ENCODE measurements at regions of chr4 and their contacts with region 1.

Region 1: GRCh38 chr4:83535520-83536361 is at the start of gene GPAT3:
- DNase-seq: peak; percentile 91
- H3K4me3 ChIP-seq: peak within 1 kb of the TSS; percentile 64 to 80 (median 66)
- H3K27ac ChIP-seq: peak within 1 kb of the TSS; percentile 78 to 81 (median 79)
- H3K4me1 ChIP-seq: peaks cover 0 to 30% (median 17%) of the 10 kb centered on the region in 4 donors
- H3K27me3 ChIP-seq: no peaks in the 10 kb centered on the region
- CTCF ChIP-seq: no peak
- EP300 ChIP-seq: no peak
- POLR2A ChIP-seq: peak in 1 of 2 donors; percentile 43
- total RNA-seq, gene GPAT3: 5.6 to 23.1 (median 17.3) TPM

Region 2: GRCh38 chr4:82984459-82984858 is 551.3 kb before region 1 on chr4:
- intact Hi-C with region 1: no loop called
- DNase-seq: no peak
- H3K4me3 ChIP-seq: no peak overlapping the region
- H3K27ac ChIP-seq: no peak overlapping the region
- H3K4me1 ChIP-seq: peaks cover 0 to 4% (median 0%) of the 10 kb centered on the region in 4 donors
- H3K27me3 ChIP-seq: no peaks in the 10 kb centered on the region
- CTCF ChIP-seq: no peak
- EP300 ChIP-seq: no peak
- POLR2A ChIP-seq: no peak

Region 3: DNA sequence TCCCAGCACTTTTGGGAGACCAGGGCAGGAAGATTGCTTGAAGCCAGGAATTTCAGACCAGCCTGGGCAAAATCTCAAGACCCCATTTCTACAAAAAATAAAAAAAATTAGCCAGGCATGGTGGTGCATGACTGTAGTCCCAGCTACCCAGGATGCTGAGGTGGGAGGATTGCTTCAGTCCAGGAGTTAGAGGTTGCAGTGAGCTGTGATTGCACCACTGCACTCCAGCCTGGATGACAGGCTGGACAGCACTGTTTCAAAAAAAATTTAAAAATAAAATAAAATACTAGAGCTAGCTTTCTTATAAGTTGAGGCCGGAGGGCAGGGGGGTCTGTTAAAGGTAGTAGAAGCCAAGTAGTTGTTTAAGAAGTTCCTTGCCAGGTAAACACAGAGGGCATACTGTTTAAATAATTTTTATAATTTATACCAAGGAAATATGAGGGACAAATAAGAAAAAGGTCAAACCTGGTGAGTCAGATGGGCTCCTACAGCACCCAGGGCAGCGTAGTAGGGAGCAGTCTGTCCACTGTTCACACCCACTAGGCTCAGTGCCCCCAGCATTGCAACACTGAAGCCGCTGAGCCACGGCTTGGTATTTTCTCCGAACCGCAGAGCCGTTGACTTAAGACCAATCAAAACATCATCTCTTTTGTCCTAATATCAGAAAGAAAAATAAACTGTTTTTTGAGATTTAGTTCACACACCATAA is 268.5 kb before region 1 on chr4:
- intact Hi-C with region 1: no loop called
- DNase-seq: no peak
- H3K4me3 ChIP-seq: no peak overlapping the region
- H3K27ac ChIP-seq: no peak overlapping the region
- H3K4me1 ChIP-seq: no peaks in the 10 kb centered on the region
- H3K27me3 ChIP-seq: no peaks in the 10 kb centered on the region
- CTCF ChIP-seq: no peak
- EP300 ChIP-seq: no peak
- POLR2A ChIP-seq: no peak

Region 4: GRCh38 chr4:83582289-83582769 is 46.6 kb after region 1 on chr4:
- intact Hi-C with region 1: loop called (anchors 5 kb)
- DNase-seq: peak; percentile 68
- H3K4me3 ChIP-seq: no peak overlapping the region
- H3K27ac ChIP-seq: peak overlapping the region in 2 of 4 donors; percentile 6 to 42
- H3K4me1 ChIP-seq: peaks cover 0 to 10% (median 10%) of the 10 kb centered on the region in 4 donors
- H3K27me3 ChIP-seq: no peaks in the 10 kb centered on the region
- CTCF ChIP-seq: no peak
- EP300 ChIP-seq: no peak
- POLR2A ChIP-seq: no peak